ENCODE measurements at regions of chr5 and their contacts with region 1.

Region 1: GRCh38 chr5:136080483-136081216 is 51.9 kb downstream of the TGFBI start:
- DNase-seq: peak; percentile 94
- H3K4me3 ChIP-seq: peak overlapping the region; percentile 8 to 53 (median 18)
- H3K27ac ChIP-seq: peak overlapping the region in 7 of 8 donors; percentile 10 to 78 (median 63)
- H3K4me1 ChIP-seq: peaks cover 0 to 28% (median 15%) of the 10 kb centered on the region in 6 donors
- H3K27me3 ChIP-seq: peaks cover 0 to 65% (median 12%) of the 10 kb centered on the region in 7 donors
- CTCF ChIP-seq: no peak
- POLR2A ChIP-seq: no peak

Region 2: GRCh38 chr5:135426102-135427082 is 654.3 kb before region 1 on chr5:
- intact Hi-C with region 1: no loop called
- DNase-seq: no peak
- H3K4me3 ChIP-seq: no peak overlapping the region
- H3K27ac ChIP-seq: peak overlapping the region in 6 of 8 donors; percentile 5 to 71 (median 44)
- H3K4me1 ChIP-seq: peaks cover 0 to 36% (median 5%) of the 10 kb centered on the region in 6 donors
- H3K27me3 ChIP-seq: no peaks in the 10 kb centered on the region
- CTCF ChIP-seq: peak; percentile 44 to 78 (median 66)
- POLR2A ChIP-seq: no peak

Region 3: DNA sequence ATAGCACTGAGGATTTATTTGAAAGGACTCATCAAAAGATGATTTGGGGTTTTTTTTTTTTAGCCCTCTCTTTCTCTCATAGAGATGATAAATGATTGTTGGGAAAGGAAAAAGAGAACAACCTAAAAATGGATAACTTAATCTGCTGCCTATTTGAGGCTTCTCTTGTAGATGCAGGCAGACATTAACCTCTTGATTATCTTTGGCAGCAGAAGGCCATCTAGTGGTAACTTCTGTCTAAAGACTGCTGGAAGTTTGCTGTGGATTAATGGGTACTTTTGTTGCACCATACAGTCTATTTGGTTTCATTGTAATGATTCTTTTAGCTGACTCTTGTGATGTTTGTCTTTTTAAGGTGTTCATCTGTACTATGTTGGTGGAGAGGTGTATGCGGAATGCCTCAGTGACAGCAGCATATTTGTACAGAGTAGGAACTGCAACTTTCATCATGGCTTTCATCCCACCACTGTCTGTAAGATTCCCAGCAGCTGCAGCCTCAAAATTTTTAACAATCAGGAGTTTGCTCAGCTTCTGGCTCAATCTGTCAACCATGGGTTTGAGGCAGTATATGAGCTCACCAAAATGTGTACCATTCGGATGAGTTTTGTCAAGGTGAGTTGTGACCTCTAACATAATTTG is 93.5 kb after region 1 on chr5:
- intact Hi-C with region 1: loop called (anchors 10 kb)
- DNase-seq: no peak
- H3K4me3 ChIP-seq: no peak overlapping the region
- H3K27ac ChIP-seq: no peak overlapping the region
- H3K4me1 ChIP-seq: no peaks in the 10 kb centered on the region
- H3K27me3 ChIP-seq: no peaks in the 10 kb centered on the region
- CTCF ChIP-seq: peak in 10 of 11 experiments; percentile 4 to 59 (median 42)
- POLR2A ChIP-seq: no peak

Region 4: GRCh38 chr5:136242611-136243010 is 162.0 kb after region 1 on chr5:
- intact Hi-C with region 1: no loop called
- DNase-seq: no peak
- H3K4me3 ChIP-seq: no peak overlapping the region
- H3K27ac ChIP-seq: no peak overlapping the region
- H3K4me1 ChIP-seq: no peaks in the 10 kb centered on the region
- H3K27me3 ChIP-seq: peaks cover 0 to 6% (median 0%) of the 10 kb centered on the region in 7 donors
- CTCF ChIP-seq: no peak
- POLR2A ChIP-seq: no peak

Region 5: DNA sequence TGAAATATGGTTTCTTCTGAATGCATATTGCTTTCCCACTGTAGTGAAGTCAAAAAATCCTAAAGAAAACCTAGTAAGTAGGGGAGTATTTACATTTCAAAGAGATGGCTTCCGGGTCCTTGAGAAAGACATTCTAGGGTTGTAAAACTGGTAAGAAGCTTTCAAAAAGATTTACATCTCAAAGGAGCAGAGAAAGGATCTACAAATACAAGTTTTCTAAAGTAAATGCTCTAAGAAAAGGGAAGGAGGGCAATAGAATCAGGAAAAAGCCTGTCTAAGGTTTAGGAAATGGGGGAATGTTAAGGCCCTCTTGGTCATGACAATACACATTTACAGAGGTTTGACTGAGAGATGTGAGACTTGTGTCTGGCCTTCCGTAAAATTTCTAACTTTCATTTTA is 301.4 kb after region 1 on chr5:
- intact Hi-C with region 1: no loop called
- DNase-seq: no peak
- H3K4me3 ChIP-seq: no peak overlapping the region
- H3K27ac ChIP-seq: no peak overlapping the region
- H3K4me1 ChIP-seq: no peaks in the 10 kb centered on the region
- H3K27me3 ChIP-seq: no peaks in the 10 kb centered on the region
- CTCF ChIP-seq: no peak
- POLR2A ChIP-seq: no peak

Measured in spleen (tissue), 13 donors.